ENCODE measurements at regions of chr6 and their contacts with region 1.

Region 1: DNA sequence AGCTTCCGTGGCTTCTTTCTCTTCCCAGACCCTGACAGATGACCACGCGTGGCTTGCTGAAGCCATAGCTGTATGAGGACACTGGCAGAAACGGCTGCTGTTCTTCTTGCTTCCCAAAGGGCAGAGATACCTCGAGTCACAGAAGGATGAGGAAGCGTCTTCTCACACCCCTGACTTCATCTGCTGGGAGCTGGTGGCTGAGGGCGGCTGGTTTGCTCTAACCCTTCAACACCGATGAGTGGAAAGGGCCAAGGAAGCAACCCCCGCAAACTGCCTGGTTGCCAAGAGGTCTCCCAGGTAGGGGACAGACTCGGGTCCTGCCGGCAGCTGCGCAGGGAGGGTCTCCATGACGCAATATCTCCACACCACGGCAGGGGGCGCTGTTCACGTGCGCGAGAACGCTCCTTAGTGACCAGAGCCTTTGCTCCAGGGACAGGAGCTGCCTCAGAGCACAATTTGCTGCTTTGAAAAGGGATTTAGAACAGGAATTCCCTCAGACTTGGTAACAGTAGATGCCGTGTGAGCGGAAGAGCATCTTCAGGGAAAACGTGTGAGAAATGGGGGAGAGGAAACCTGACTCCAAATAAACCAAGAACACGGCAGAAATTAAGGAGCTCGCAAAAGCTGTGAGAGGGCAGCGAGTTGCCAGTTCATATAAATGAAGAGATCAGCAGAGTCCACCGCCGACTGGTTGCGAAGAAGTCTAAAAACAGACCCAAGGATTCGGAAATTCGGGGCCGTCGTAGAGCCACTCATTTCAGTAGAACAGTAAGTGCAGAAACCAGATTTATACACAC is 80.2 kb downstream of the ERMARD start:
- DNase-seq: peak; percentile 66
- H3K4me3 ChIP-seq: no peak overlapping the region
- H3K27ac ChIP-seq: no peak overlapping the region
- H3K4me1 ChIP-seq: peaks cover 3% of the 10 kb centered on the region
- CTCF ChIP-seq: peak; percentile 93

Region 2: GRCh38 chr6:169930799-169931198 is 99.2 kb after region 1 on chr6:
- CTCF ChIA-PET with region 1: interaction called, 3 read pairs
- POLR2A ChIA-PET with region 1: no interaction called
- intact Hi-C with region 1: loop called (anchors 2 kb)
- DNase-seq: no peak
- H3K4me3 ChIP-seq: no peak overlapping the region
- H3K27ac ChIP-seq: no peak overlapping the region
- H3K4me1 ChIP-seq: no peaks in the 10 kb centered on the region
- CTCF ChIP-seq: peak; percentile 44

Region 3: DNA sequence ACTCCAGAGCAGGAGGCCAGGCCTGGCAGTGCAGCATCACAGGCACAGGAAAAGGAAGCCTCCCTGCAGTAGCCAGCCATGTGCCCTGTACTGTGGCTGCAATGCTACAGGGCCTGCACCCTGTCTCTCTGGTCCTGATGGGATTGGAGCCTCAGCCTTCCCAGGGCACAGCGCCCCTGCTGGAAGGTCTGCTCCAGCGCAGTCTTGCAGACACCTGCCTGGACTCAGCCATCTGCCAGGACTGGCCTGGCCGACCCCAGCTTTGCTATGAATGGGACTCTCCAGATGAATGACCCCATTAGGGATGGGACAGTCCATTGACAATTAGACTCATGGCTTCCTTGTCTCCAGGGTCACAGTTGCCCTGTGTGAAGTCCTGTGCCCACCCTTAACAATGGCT is 171.4 kb after region 1 on chr6:
- CTCF ChIA-PET with region 1: no interaction called
- POLR2A ChIA-PET with region 1: no interaction called
- intact Hi-C with region 1: loop called (anchors 1 kb)
- DNase-seq: no peak
- H3K4me3 ChIP-seq: no peak overlapping the region
- H3K27ac ChIP-seq: no peak overlapping the region
- H3K4me1 ChIP-seq: no peaks in the 10 kb centered on the region
- CTCF ChIP-seq: peak; percentile 46

Region 4: DNA sequence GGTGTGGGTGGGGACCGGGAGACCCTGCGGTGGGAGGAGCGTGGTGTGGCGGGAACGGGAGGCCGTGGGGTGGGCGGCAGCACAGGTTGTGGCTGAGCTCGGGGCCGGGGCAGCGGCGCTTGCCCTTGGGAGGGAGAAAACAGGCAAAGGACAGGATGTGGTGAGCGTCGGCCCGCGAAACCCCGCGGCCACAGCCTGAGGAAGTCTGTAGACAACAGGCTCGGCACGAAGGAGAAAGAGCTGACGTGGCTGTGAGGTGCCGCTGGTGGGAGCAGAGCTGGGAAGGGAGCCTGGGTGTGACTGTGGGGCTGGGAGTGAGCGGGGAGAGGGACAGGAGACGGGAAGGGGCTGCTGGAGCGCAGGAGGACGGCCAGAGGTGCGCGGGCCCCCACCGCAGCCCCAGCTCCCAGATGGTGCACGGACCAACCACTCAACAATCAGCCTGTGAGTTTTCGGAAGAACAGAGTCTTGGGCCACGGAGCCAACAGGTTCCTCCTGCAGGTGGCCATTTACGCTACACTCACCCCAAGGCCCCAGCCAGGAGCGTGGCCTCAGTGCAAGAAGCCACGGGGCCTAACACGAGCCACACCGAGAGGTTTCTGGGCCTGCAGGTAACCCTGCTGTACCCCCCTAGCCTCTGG is 256.4 kb after region 1 on chr6:
- CTCF ChIA-PET with region 1: no interaction called
- POLR2A ChIA-PET with region 1: no interaction called
- intact Hi-C with region 1: loop called (anchors 2 kb)
- DNase-seq: peak; percentile 74
- H3K4me3 ChIP-seq: peak overlapping the region; percentile 49
- H3K27ac ChIP-seq: peak overlapping the region; percentile 69
- H3K4me1 ChIP-seq: peaks cover 31% of the 10 kb centered on the region
- CTCF ChIP-seq: no peak

Region 5: GRCh38 chr6:170295510-170296422 is 464.1 kb after region 1 on chr6:
- CTCF ChIA-PET with region 1: interaction called, 4 read pairs
- POLR2A ChIA-PET with region 1: no interaction called
- intact Hi-C with region 1: loop called (anchors 5 kb)
- DNase-seq: peak; percentile 20
- H3K4me3 ChIP-seq: peak overlapping the region; percentile 24
- H3K27ac ChIP-seq: no peak overlapping the region
- H3K4me1 ChIP-seq: peaks cover 7% of the 10 kb centered on the region
- CTCF ChIP-seq: no peak

Region 6: DNA sequence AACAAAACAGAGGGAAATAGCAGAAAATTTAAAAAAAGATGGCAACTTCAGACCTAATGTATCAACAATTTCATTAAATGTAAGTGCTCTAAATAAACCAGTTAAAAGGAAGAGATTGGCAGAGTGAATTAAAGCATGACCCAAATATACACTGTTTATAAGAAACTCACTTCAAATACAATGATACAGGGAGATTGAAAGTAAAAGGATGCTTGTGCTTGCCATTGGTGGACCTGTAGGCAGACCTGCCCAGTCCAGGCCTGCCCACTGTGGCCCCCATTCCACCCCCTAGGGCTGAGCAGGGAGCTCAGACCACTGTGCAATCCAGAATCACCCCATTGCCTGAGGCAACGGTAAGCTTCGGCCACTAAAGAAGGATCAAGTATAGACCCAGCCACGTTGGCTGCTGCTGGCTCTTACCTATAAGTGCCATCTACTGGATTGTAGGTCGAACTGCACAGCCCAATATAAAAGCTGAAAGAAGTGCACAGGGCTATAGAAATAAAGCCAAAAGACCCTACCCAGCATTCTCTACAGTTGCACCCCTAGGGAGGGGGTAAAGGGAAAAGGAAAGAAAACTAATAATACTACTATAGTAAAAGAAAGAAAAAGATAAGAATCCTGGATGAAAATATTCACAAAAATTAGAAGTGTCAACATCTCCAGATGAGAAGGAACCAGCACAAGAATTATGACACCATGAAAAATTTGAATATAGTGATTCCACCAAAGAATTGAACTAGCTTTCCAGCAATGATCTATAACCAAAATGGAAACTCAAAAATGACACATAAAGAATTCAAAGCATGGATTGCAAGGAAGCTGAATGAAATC is 685.4 kb after region 1 on chr6:
- CTCF ChIA-PET with region 1: no interaction called
- POLR2A ChIA-PET with region 1: no interaction called
- intact Hi-C with region 1: loop called (anchors 1 kb)
- DNase-seq: peak; percentile 74
- H3K4me3 ChIP-seq: no peak overlapping the region
- H3K27ac ChIP-seq: no peak overlapping the region
- H3K4me1 ChIP-seq: no peaks in the 10 kb centered on the region
- CTCF ChIP-seq: peak; percentile 88